GM18951 (cell line): ENCODE measurements at regions of chr1 and their contacts with region 1.

Region 1: GRCh38 chr1:160244209-160244608 is 18.1 kb downstream of the DCAF8 start:
- POLR2A ChIP-seq: no peak

Region 2: DNA sequence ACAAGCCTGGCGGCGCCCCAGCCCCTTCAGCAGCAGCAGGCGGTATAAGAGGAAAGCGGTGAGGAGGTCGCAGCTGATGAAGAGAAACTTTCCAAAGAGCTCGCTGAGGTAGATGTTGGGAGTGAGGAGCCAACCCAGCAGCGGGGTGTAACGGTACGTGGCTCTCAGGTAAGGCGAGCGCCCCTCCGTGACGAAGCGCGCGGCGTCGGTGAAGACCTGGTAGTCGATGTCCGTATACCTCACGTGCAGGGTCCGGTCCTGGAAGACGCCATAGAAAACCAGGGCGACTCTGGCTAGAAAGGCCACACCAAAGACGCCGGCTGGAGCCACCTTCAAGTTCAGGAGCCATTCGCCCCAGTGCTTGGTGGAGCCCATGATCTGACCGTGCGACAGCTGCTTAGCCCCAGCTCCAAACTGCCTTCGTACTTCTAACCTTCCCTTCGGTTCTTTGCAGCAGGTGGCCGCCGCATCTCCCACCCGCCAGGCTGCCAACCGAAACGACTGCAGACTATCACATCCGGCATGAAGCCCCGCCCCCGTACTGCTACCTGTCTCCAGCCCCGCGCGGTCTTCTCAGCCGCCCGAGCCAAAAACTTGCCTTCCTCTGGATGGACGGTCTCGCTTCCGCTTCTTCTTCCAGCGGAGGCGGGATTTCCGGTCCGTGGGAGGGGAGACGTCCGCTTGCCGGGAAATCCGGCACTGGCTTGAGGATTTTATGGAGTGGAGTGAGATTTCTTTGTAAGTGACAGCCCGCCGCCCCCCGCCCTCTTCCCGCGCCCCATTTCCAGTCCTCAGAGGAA is 212.6 kb before region 1 on chr1 and contains the start of gene PIGM:
- in situ Hi-C with region 1: no loop called
- POLR2A ChIP-seq: peak; percentile 75

Region 3: DNA sequence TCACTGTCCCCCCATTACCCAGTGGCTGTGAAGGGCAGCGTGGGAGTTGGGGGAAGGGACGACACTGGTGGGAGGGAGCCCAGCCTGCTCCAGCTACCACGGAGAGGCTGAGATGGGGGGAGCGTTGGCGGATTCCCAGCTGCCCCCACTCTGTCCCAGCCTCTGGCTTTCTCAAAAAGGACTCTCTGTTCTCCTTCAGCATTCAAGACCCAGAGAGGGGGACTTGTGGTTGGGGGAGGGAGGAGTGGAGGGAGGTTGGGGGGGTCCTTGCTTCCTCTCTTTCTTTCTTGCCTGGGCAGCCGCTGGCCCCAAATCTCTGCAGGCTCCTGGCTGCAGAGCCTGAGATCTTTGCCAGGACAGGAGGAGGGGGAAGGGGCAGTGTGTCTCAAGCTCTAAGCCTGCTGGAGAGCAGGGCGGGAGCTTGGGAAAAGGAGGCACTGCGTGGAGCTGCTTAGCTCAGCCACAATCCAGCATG is 126.5 kb before region 1 on chr1:
- in situ Hi-C with region 1: loop called (anchors 10 kb)
- POLR2A ChIP-seq: no peak